AG04450 (cell line): ENCODE measurements at regions of chr1 and their contacts with region 1.

Region 1: GRCh38 chr1:185595835-185596667 is 138.1 kb upstream of the HMCN1 start:
- DNase-seq: peak; percentile 6
- H3K4me3 ChIP-seq: no peak overlapping the region
- H3K27ac ChIP-seq: no peak overlapping the region
- H3K27me3 ChIP-seq: no peaks in the 10 kb centered on the region
- CTCF ChIP-seq: peak; percentile 83

Region 2: GRCh38 chr1:185546029-185546428 is 50.0 kb before region 1 on chr1:
- CTCF ChIA-PET with region 1: interaction called, 16 read pairs
- POLR2A ChIA-PET with region 1: no interaction called
- DNase-seq: no peak
- H3K4me3 ChIP-seq: no peak overlapping the region
- H3K27ac ChIP-seq: no peak overlapping the region
- H3K27me3 ChIP-seq: peaks cover 3% of the 10 kb centered on the region
- CTCF ChIP-seq: no peak

Region 3: DNA sequence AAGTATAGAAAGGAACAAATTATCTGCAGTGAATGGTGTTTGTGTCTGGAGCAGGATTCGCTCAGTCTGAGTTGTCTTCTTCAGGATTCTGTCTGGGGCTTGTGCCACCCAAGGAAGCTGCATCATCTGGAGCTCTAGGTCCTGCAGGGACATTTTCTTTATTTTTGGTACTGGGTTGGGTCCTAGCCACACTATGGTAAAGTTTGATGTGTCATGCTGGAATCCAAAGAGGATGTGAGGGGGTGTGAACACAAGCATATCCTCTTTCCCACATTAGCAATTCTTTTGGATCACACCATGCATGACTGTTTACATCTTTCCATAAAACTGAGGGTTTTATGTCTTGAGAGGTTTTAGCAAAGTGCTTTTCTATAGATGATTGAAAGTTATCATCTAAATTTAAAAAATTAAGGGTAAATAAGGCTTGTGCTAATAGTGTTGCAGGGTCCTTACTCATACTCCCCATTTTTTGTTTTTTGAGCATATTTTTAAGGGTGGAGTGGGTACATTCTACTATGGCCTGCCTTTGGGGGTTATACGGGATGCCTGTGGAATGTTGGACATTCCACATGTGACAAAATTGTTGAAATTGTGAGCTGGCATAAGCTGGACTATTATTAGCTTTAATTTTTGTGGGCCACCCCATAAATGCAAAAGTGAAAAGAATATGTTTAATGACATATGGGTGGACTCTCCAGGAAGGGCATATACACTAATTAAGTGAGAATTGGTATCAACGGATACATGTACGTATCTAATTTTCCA is 13.9 kb before region 1 on chr1:
- CTCF ChIA-PET with region 1: interaction called, 27 read pairs
- POLR2A ChIA-PET with region 1: no interaction called
- DNase-seq: no peak
- H3K4me3 ChIP-seq: no peak overlapping the region
- H3K27ac ChIP-seq: no peak overlapping the region
- H3K27me3 ChIP-seq: no peaks in the 10 kb centered on the region
- CTCF ChIP-seq: no peak

Region 4: GRCh38 chr1:185632659-185633423 is 36.8 kb after region 1 on chr1:
- CTCF ChIA-PET with region 1: interaction called, 10 read pairs
- POLR2A ChIA-PET with region 1: no interaction called
- DNase-seq: no peak
- H3K4me3 ChIP-seq: no peak overlapping the region
- H3K27ac ChIP-seq: no peak overlapping the region
- H3K27me3 ChIP-seq: peaks cover 2% of the 10 kb centered on the region
- CTCF ChIP-seq: no peak

Region 5: DNA sequence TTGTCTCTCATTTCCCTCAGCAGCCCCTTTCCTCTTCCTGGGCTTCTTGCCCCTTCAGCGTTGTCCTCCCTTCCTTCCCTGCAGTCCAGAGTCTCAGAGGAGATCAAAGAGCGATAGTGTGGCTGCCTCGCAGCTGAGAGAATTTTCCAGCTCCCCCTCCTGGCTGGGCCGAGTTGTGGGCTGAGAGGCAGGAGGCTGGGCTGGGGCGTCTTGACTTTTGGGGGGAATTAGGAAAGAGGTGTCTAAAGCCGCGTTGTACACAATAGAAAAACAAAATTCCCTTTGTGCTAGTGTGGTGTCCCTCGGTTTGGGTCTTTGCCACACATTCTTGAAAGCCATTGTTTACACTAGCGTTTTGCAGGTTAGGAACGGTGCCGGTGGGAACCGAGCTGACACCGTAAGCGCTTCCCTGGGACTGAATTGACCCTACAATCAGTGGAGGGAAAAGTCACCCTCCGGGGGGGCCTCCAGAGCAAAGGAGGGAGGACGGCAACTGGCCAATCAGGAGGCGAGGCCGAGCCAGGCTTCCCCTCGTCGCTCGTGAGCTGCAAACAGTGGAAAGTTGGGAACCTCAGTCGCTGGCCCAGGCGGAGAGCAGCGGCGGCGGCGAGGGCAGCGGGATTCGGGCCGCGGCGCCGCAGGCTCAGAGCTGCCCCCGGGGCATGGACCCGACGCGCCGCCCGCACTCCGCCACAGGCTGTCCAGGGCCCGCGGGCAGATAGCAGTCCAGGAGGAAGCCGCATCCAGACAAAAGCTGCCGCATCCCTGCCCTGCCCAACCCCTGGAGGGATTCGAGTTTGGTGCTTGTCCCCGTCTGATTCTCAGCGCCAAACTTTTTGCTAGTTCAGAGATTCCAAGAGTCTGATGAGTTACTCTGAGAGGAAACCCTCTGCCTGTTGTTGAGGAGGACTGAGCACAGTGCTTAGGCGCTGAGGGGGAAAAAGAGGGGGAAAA is 138.0 kb after region 1 on chr1 and contains the start of gene HMCN1:
- CTCF ChIA-PET with region 1: no interaction called
- POLR2A ChIA-PET with region 1: no interaction called
- DNase-seq: no peak
- H3K4me3 ChIP-seq: peak within 1 kb of the TSS; percentile 64
- H3K27ac ChIP-seq: peak within 1 kb of the TSS; percentile 55
- H3K27me3 ChIP-seq: no peaks in the 10 kb centered on the region
- CTCF ChIP-seq: peak; percentile 59
- polyA plus RNA-seq, gene HMCN1: 19.7 and 20.9 TPM in 2 replicates